Kidney (tissue), 22 donors: ENCODE measurements at regions of chr22 and their contacts with region 1.

Region 1: GRCh38 chr22:46122511-46122971 is 27.8 kb upstream of the PPARA start:
- DNase-seq: peak; percentile 66 to 90 (median 83)
- H3K4me3 ChIP-seq: no peak overlapping the region
- H3K27ac ChIP-seq: no peak overlapping the region
- H3K4me1 ChIP-seq: peaks cover 0 to 2% (median 0%) of the 10 kb centered on the region in 3 donors
- H3K27me3 ChIP-seq: no peaks in the 10 kb centered on the region
- CTCF ChIP-seq: peak; percentile 94

Region 2: GRCh38 chr22:45977003-45977411 is 145.5 kb before region 1 on chr22 and contains the start of gene WNT7B:
- intact Hi-C with region 1: no loop called
- DNase-seq: peak in 3 of 5 donors; percentile 42 to 74 (median 60)
- H3K4me3 ChIP-seq: no peak within 1 kb of the TSS
- H3K27ac ChIP-seq: no peak within 1 kb of the TSS
- H3K4me1 ChIP-seq: peaks cover 0 to 10% (median 0%) of the 10 kb centered on the region in 3 donors
- H3K27me3 ChIP-seq: peaks cover 31% of the 10 kb centered on the region
- CTCF ChIP-seq: no peak
- total RNA-seq, gene WNT7B: 1.6 TPM

Region 3: GRCh38 chr22:46180370-46181137 is 58.0 kb after region 1 on chr22:
- intact Hi-C with region 1: no loop called
- DNase-seq: no peak
- H3K4me3 ChIP-seq: no peak overlapping the region
- H3K27ac ChIP-seq: no peak overlapping the region
- H3K4me1 ChIP-seq: no peaks in the 10 kb centered on the region
- H3K27me3 ChIP-seq: no peaks in the 10 kb centered on the region
- CTCF ChIP-seq: no peak

Region 4: GRCh38 chr22:46245511-46245910 is 123.0 kb after region 1 on chr22:
- intact Hi-C with region 1: no loop called
- DNase-seq: peak in 3 of 5 donors; percentile 26 to 86 (median 52)
- H3K4me3 ChIP-seq: peak overlapping the region in 1 of 3 donors; percentile 8
- H3K27ac ChIP-seq: no peak overlapping the region
- H3K4me1 ChIP-seq: peaks cover 0 to 10% (median 0%) of the 10 kb centered on the region in 3 donors
- H3K27me3 ChIP-seq: no peaks in the 10 kb centered on the region
- CTCF ChIP-seq: no peak

Region 5: DNA sequence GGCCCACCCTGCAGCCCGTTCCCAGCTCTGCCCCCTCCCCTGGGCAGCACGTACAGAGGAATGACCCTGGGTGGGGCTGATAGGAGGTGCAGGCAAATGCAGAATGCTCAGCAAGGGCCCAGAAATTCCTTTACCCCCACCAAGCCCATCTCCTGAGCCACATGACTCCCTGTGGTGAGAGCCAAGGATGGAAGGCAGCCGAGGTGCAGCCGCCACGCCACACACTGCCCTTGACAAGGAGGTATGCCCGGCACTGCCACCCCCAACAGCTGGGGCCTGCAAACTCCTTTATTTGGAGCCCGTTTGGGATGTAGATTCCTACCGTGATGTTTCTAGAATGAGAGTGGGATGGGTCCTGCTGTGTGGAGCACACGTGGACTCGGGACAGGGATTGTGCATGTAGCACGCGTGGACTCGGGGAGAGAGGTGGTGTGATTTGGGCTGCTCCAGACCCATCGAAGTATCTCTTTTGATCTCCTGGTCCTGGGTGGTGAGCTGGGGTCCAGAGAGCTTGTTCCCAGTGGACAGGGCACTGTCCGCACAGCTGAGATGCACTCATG is 187.1 kb after region 1 on chr22:
- intact Hi-C with region 1: loop called (anchors 5 kb)
- DNase-seq: peak in 1 of 5 donors; percentile 27
- H3K4me3 ChIP-seq: no peak overlapping the region
- H3K27ac ChIP-seq: no peak overlapping the region
- H3K4me1 ChIP-seq: no peaks in the 10 kb centered on the region
- H3K27me3 ChIP-seq: no peaks in the 10 kb centered on the region
- CTCF ChIP-seq: no peak